ENCODE measurements at regions of chr1 and their contacts with region 1.

Region 1: GRCh38 chr1:158124999-158125398 is 55.7 kb upstream of the CD1D start:
- DNase-seq: peak; percentile 60 to 95 (median 82)

Region 2: DNA sequence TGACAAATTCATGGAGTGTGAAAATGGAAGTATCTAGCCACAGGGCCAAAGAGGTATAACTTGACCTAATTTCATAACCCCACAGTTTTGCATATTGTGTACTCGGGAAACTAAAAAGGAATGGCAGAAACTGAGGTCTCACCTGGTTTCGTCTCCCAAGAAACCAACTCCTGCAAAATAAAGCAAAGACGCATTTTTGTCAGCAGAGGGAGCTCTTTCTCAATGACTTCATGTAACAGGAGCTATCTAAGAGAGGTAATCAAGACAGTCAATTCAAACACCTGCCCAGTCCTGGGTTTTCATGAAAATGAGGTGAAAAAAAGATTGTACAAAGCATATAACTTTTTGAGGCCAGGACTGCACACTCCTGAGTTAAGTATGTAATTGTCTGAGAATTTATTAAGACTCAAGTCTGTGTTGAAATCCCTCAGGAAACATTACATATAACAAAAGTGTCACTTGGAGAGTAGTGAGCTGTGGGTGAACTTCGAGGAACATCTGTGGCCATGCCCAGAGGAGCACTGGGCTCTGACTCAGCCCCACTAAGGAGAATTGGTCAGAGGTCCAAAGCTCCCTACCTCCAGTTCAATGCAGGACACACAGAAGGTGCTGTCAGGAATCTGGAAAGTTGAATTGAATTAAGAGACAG is 544.7 kb before region 1 on chr1:
- intact Hi-C with region 1: loop called (anchors 2 kb)
- DNase-seq: no peak

Region 3: GRCh38 chr1:157878059-157878458 is 246.9 kb before region 1 on chr1:
- intact Hi-C with region 1: loop called (anchors 10 kb)
- DNase-seq: no peak

Region 4: DNA sequence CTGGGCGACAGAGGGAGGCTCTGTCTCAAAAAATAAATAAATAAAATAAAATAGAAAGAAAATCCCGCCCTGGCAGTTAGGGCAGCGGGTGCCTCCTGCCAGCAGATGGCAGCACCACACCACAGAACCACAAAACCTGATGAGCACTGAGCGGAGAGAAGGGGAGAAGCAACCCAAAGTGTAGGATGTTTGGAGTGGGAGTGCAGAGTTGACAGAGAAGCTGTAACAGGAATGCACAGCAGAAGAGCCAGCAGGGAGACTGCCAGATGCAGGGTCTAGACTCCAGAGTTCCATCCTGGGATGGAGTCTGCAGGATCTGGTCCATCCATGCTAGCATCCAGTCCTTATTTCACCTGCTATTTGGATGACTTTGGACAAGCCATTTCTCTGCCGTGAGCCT is 161.3 kb before region 1 on chr1:
- intact Hi-C with region 1: loop called (anchors 2 kb)
- DNase-seq: peak; percentile 48 to 96 (median 78)

Region 5: GRCh38 chr1:157992031-157992832 is 132.8 kb before region 1 on chr1:
- intact Hi-C with region 1: loop called (anchors 1 kb)
- DNase-seq: peak in 9 of 10 donors; percentile 33 to 93 (median 67)